ENCODE measurements at regions of chr20 and their contacts with region 1.

Region 1: GRCh38 chr20:2237059-2237458 is 58.7 kb upstream of the TGM3 start:
- DNase-seq: peak; percentile 89
- H3K4me3 Mint-ChIP-seq: no peak overlapping the region
- H3K27ac Mint-ChIP-seq: no peak overlapping the region
- H3K4me1 Mint-ChIP-seq: peaks cover 17% of the 10 kb centered on the region
- H3K27me3 Mint-ChIP-seq: peaks cover 42% of the 10 kb centered on the region
- CTCF ChIP-seq: peak; percentile 13

Region 2: DNA sequence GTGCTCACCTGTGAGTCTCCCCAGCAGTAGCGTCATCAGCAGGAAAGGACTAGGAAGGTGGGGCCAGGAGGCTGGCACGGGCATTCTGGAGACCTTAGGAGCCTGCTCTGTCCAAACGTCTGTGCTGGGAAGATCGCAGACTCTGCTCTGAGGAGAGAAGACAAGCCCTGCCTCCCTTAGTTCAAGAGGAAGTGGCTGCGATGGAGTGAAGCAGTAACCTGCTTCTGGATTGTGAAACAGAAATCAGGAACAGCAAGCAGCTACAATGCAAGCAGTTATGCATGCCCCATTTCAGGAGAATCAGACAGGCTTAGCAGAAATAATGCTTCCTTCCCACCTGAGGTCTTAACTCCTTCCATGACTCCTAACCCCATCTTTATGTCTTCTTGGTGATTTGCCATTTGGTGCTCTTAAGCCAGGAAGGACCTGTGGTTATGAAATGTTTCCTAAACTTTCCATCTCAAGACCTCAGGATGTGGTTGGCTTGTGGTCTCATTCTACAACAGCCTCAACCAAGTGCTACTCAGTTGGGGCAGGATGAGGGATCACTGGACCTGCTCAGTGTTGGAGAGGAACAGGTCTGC is 617.1 kb before region 1 on chr20 and contains the start of gene SIRPB1:
- CTCF ChIA-PET with region 1: no interaction called
- POLR2A ChIA-PET with region 1: no interaction called
- intact Hi-C with region 1: no loop called
- DNase-seq: no peak
- H3K4me3 Mint-ChIP-seq: no peak within 1 kb of the TSS
- H3K27ac Mint-ChIP-seq: no peak within 1 kb of the TSS
- H3K4me1 Mint-ChIP-seq: peaks cover 7% of the 10 kb centered on the region
- H3K27me3 Mint-ChIP-seq: no peaks in the 10 kb centered on the region
- CTCF ChIP-seq: no peak
- total RNA-seq, gene SIRPB1: 1.4 and 2.4 TPM in 2 replicates

Region 3: GRCh38 chr20:2217857-2218539 is 19.1 kb before region 1 on chr20:
- CTCF ChIA-PET with region 1: interaction called, 10 read pairs
- POLR2A ChIA-PET with region 1: interaction called, 4 read pairs
- intact Hi-C with region 1: no loop called
- DNase-seq: no peak
- H3K4me3 Mint-ChIP-seq: no peak overlapping the region
- H3K27ac Mint-ChIP-seq: no peak overlapping the region
- H3K4me1 Mint-ChIP-seq: no peaks in the 10 kb centered on the region
- H3K27me3 Mint-ChIP-seq: peaks cover 24% of the 10 kb centered on the region
- CTCF ChIP-seq: no peak

Region 4: DNA sequence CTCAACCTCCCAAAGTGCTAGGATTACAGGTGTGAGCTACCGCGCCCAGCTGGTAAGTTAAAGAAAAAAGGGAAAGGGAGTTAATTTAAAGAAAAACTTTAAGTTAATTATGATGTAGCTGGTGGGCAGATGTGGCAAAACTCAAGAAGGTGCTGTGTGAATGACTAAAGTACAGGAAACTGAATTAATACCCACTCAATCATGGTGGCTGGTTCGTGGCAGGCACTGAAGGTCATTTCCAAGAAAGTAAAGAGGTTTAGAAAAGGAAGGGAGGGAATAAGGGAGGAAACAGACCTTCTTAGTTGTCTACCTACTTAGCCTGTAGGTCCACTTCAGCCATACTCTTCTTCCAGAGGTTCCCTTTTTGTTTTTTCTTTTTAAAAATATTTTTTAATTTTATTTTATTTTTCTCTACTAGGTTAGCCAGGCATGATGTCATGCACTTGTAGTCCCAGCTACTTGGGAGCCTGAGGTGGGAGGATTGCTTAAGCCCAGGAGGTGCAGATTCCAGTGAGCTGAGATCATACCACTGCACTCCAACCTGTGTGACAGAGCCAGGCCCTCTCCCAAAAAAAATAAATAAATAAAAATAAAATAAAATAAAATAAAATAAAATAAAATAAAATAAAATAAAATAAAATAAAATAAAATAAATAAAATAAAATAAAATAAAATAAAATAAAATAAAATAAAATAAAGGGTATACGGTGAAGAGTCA is 46.8 kb after region 1 on chr20:
- CTCF ChIA-PET with region 1: interaction called, 19 read pairs
- POLR2A ChIA-PET with region 1: interaction called, 15 read pairs
- intact Hi-C with region 1: no loop called
- DNase-seq: peak; percentile 74
- H3K4me3 Mint-ChIP-seq: no peak overlapping the region
- H3K27ac Mint-ChIP-seq: no peak overlapping the region
- H3K4me1 Mint-ChIP-seq: peaks cover 6% of the 10 kb centered on the region
- H3K27me3 Mint-ChIP-seq: peaks cover 5% of the 10 kb centered on the region
- CTCF ChIP-seq: no peak

Region 5: GRCh38 chr20:2301164-2301622 is 64.1 kb after region 1 on chr20:
- CTCF ChIA-PET with region 1: interaction called, 15 read pairs
- POLR2A ChIA-PET with region 1: interaction called, 4 read pairs
- intact Hi-C with region 1: no loop called
- DNase-seq: peak; percentile 58
- H3K4me3 Mint-ChIP-seq: no peak overlapping the region
- H3K27ac Mint-ChIP-seq: no peak overlapping the region
- H3K4me1 Mint-ChIP-seq: peaks cover 18% of the 10 kb centered on the region
- H3K27me3 Mint-ChIP-seq: peaks cover 30% of the 10 kb centered on the region
- CTCF ChIP-seq: no peak

Region 6: GRCh38 chr20:2340136-2340535 is 103.1 kb after region 1 on chr20:
- CTCF ChIA-PET with region 1: interaction called, 10 read pairs
- POLR2A ChIA-PET with region 1: interaction called, 3 read pairs
- intact Hi-C with region 1: loop called (anchors 10 kb)
- DNase-seq: no peak
- H3K4me3 Mint-ChIP-seq: no peak overlapping the region
- H3K27ac Mint-ChIP-seq: no peak overlapping the region
- H3K4me1 Mint-ChIP-seq: peaks cover 6% of the 10 kb centered on the region
- H3K27me3 Mint-ChIP-seq: no peaks in the 10 kb centered on the region
- CTCF ChIP-seq: no peak

Region 7: DNA sequence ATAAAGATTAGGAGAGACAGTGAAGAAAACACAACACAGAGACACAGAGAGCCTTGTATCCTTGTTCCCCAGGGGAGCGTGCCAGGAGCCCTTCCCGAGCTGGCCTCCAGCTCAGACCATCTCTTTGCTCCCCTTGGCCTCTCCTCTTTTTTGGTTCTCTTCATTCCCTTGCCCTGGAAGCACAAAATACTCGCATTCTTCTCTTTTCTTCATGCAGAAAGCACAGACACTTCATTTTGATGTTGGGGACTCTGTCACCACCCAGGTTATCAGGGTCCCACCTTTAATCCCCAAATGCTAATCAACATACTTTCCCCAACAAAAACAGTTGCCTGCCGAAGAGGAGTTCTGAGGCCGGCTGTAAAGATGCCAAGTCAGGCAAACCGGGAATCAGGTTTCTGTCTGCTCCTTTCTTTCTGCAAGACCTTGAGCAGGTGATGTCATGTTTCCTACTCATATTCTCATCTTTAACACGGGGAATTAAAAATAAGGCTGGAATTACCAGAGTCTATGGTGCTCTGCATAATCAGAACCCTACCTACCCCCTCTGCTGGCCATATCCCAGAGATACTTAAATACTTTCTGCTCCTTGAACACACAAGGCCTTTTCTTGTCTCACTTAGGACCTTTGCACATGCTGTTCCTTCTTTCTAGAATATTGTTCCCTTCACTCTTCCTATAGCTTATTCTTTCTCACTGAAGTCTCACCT is 165.4 kb after region 1 on chr20:
- CTCF ChIA-PET with region 1: interaction called, 19 read pairs
- POLR2A ChIA-PET with region 1: interaction called, 4 read pairs
- intact Hi-C with region 1: no loop called
- DNase-seq: peak; percentile 55
- H3K4me3 Mint-ChIP-seq: no peak overlapping the region
- H3K27ac Mint-ChIP-seq: no peak overlapping the region
- H3K4me1 Mint-ChIP-seq: no peaks in the 10 kb centered on the region
- H3K27me3 Mint-ChIP-seq: no peaks in the 10 kb centered on the region
- CTCF ChIP-seq: peak; percentile 43

Region 8: DNA sequence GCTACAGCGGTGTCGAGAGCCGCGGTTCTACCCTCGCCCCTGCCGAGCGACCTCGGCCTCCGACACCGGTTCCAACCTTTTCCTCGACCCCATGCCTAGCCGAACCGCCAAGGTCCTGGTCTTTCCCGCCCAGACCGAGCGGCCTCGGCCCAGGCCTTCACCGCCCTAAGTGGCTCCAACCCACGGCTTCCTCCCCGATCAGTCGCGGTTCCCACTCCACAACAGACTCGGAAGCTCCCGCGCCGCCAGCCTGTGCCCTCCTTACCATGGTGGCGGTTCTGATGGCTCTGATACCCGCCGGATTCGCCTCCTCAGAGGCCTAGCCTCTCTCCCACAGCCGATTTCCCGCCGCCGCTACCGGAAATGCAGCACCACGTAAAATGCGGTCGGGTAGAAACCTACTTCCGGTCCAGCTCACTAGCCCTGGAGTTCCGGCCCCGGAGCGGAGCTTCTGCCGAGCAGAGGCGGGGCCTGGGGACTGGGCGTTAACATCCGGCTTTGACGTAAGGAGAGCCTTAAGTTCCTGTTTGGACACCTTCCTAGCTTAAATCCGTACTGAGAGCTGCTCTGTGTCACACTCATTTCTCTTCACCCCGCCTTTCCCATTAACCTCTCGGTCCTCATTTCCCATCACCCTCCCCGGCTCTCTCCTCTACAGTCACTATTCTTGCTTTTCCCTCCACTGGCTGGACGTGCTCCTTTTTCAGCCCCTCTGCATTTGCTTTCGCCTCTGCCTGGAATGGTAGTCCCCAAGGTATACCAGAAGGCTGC is 233.5 kb after region 1 on chr20 and contains the start of gene SNRPB:
- CTCF ChIA-PET with region 1: interaction called, 5 read pairs
- POLR2A ChIA-PET with region 1: interaction called, 13 read pairs
- intact Hi-C with region 1: no loop called
- DNase-seq: peak; percentile 98
- H3K4me3 Mint-ChIP-seq: peak within 1 kb of the TSS; percentile 96
- H3K27ac Mint-ChIP-seq: peak within 1 kb of the TSS; percentile 100
- H3K4me1 Mint-ChIP-seq: peaks cover 55% of the 10 kb centered on the region
- H3K27me3 Mint-ChIP-seq: no peaks in the 10 kb centered on the region
- CTCF ChIP-seq: no peak
- total RNA-seq, gene SNRPB: 236 and 240 TPM in 2 replicates

Region 9: DNA sequence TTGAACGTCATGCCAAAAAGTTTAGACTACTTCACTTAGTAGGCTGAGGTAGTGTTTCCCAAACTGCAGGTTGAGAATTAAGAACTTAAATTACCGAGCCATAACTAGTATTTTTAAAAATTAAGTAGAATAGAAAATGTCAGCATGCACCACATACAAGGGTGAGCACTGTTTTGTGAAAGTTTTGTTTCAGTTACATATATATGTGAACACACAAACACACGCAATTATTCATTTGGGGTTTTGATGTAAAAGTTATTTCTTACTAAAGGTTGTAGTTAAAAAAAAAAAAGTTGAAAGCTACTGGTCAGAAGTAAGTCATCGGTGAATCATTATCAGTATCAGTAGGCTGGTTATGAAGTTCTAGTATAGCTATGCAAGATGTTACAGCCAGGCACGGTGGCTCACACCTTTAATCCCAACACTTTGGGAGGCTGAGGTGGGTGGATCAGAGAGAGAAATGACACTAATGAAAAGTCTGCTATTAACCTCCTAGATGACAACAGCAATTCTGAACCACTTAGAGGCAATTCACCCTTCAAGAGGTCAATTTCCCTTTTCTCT is 898.5 kb after region 1 on chr20:
- CTCF ChIA-PET with region 1: no interaction called
- POLR2A ChIA-PET with region 1: no interaction called
- intact Hi-C with region 1: no loop called
- DNase-seq: no peak
- H3K4me3 Mint-ChIP-seq: no peak overlapping the region
- H3K27ac Mint-ChIP-seq: no peak overlapping the region
- H3K4me1 Mint-ChIP-seq: no peaks in the 10 kb centered on the region
- H3K27me3 Mint-ChIP-seq: no peaks in the 10 kb centered on the region
- CTCF ChIP-seq: no peak

Measured in MCF 10A (cell line).